HepG2 (cell line): ENCODE measurements at regions of chr2 and their contacts with region 1.

Region 1: DNA sequence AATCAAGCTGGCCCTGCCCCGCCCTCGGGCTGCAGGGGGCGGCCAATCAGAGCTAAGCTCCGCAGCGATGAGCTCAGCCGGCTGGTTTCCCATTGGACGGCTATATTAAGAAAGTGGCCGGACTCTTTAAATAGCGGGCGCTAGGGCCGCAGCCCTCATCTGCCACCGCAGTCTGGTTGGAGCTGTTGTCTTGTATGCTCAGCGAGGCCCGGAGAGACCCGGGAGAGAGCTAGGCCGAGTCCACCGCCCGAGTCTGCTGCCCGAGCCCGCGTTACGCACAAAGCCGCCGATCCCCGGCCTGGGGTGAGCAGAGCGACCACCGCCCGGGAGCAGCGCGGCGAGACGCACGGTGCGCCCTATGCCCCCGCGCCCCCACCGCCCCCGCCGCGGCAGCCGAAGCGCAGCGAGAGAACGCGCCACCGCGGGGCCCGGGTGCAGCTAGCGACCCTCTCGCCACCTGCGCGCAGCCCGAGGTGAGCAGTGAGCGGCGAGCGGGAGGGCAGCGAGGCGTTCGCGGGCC is at the start of gene RHOB:
- DNase-seq: peak; percentile 98
- ATAC-seq: peak; percentile 82
- H3K4me3 ChIP-seq: peak within 1 kb of the TSS; percentile 78 to 97 (median 89)
- H3K27ac ChIP-seq: peak within 1 kb of the TSS; percentile 92
- H3K4me1 ChIP-seq: peaks cover 60% of the 10 kb centered on the region
- H3K27me3 ChIP-seq: no peaks in the 10 kb centered on the region; a peak in 1 of 5 replicates
- CTCF ChIP-seq: no peak
- EP300 ChIP-seq: peak; percentile 35 to 54; a peak in 1 of 4 replicates
- POLR2A ChIP-seq: peak; percentile 100
- RAD21 ChIP-seq: peak; percentile 65
- total RNA-seq, gene RHOB: 192 and 268 TPM in 2 replicates

Region 2: GRCh38 chr2:20350753-20351554 is 96.0 kb before region 1 on chr2 and contains the start of gene PUM2:
- CTCF ChIA-PET with region 1: no interaction called
- POLR2A ChIA-PET with region 1: interaction called, 10 read pairs
- in situ Hi-C with region 1: no loop called
- intact Hi-C with region 1: no loop called
- DNase-seq: peak; percentile 96
- ATAC-seq: peak; percentile 87
- H3K4me3 ChIP-seq: peak within 1 kb of the TSS; percentile 96 to 98 (median 96)
- H3K27ac ChIP-seq: peak within 1 kb of the TSS; percentile 98
- H3K4me1 ChIP-seq: peaks cover 61% of the 10 kb centered on the region
- H3K27me3 ChIP-seq: no peaks in the 10 kb centered on the region; a peak in 1 of 5 replicates
- CTCF ChIP-seq: 0 out of 2 replicates have a peak, but pooled peaks have one; percentile 15
- EP300 ChIP-seq: peak in 1 of 2 experiments; percentile 54; a peak in 2 of 4 replicates
- POLR2A ChIP-seq: peak; percentile 62 to 94; a peak in 3 of 4 replicates
- RAD21 ChIP-seq: no peak; the same call in 1 of the 2 replicates
- total RNA-seq, gene PUM2: 69.6 and 94.7 TPM in 2 replicates

Region 3: DNA sequence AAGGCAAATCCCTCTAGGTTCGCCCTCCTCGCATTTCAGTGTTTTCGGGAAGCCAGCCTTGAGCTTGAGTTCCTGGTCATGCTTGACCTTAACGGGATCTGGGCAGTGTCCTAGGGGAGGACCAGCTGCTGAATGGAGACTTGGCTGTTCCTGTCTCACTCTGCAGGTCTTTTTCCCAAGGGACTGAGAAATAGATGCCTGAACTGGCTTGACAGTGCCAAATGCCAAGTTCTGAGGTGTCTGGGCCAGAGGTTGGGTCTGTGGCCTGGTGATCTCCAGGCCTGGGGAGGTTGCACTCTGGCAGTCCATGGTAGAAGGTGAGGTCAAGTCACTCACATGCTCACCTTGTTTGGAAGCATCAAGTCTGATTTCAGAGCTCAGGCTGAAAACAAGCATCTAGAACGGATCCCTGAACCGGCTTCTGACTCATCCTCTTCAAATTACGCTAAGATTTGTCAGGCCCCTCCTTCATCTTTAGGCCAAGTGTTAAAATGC is 19.5 kb after region 1 on chr2:
- CTCF ChIA-PET with region 1: no interaction called
- POLR2A ChIA-PET with region 1: interaction called, 95 read pairs
- in situ Hi-C with region 1: no loop called
- intact Hi-C with region 1: no loop called
- DNase-seq: no peak
- ATAC-seq: no peak; the same call in 2 of the 3 replicates
- H3K4me3 ChIP-seq: no peak overlapping the region
- H3K27ac ChIP-seq: no peak overlapping the region
- H3K4me1 ChIP-seq: peaks cover 23% of the 10 kb centered on the region
- H3K27me3 ChIP-seq: peaks cover 2 to 15% of the 10 kb centered on the region in 2 experiments; a peak in 3 of 5 replicates
- CTCF ChIP-seq: no peak
- EP300 ChIP-seq: no peak
- POLR2A ChIP-seq: no peak
- RAD21 ChIP-seq: no peak

Region 4: GRCh38 chr2:20507166-20507692 is 60.3 kb after region 1 on chr2:
- CTCF ChIA-PET with region 1: interaction called, 4 read pairs
- POLR2A ChIA-PET with region 1: interaction called, 74 read pairs
- in situ Hi-C with region 1: no loop called
- intact Hi-C with region 1: no loop called
- DNase-seq: no peak
- ATAC-seq: peak; percentile 55
- H3K4me3 ChIP-seq: no peak overlapping the region
- H3K27ac ChIP-seq: peak overlapping the region; percentile 14
- H3K4me1 ChIP-seq: peaks cover 71% of the 10 kb centered on the region
- H3K27me3 ChIP-seq: no peaks in the 10 kb centered on the region
- CTCF ChIP-seq: no peak
- EP300 ChIP-seq: no peak
- POLR2A ChIP-seq: no peak
- RAD21 ChIP-seq: no peak

Region 5: DNA sequence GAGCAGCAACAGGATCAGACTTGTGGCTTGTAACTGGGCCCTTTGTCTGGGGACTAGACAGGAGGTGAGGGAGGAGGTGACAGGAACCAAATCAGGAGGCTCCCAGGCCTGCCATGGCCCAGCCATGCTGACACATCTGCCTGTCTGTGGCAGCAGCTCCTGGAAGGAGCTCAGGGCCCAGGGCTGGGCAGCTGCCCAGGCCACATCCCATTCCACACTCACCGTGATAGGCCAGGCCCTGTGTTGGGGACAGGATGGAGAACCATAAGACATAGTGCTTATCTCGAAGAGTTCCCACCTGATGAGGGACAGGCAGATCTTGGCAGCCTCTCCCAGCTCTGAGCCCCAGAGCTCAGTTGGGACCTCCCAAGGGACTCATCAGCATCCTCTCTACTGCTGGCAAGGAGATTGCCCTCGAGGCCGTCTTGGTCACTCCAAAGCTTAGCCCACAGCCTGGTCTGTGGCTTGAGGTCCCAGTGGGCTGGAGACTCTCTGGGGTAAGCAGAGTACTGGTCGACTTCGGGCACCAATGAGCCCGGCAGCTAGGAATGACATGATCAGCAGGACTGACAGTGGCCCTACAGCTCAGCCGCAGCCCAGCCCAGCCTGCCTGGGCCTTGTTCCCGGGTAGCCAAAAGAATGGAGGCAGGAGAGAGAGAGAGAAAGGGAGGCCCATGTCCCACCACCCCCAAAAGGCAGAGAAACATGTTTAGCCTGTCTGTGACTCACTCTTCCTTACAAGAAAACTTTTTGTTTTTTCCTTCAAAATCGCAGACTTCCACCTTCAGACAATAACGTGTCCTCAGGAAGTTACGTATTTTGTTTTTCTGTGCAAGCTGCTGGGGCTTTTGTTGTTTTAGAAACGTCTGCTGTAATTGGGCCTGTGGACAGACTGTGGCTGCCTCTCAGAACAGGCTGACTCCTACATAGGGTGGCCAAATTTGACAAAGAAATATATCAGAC is 121.8 kb after region 1 on chr2:
- CTCF ChIA-PET with region 1: no interaction called
- POLR2A ChIA-PET with region 1: interaction called, 1,537 read pairs
- in situ Hi-C with region 1: no loop called
- intact Hi-C with region 1: no loop called
- DNase-seq: no peak
- ATAC-seq: no peak
- H3K4me3 ChIP-seq: no peak overlapping the region
- H3K27ac ChIP-seq: peak overlapping the region; percentile 49
- H3K4me1 ChIP-seq: peaks cover 96% of the 10 kb centered on the region
- H3K27me3 ChIP-seq: no peaks in the 10 kb centered on the region
- CTCF ChIP-seq: no peak
- EP300 ChIP-seq: no peak
- POLR2A ChIP-seq: no peak
- RAD21 ChIP-seq: no peak

Region 6: GRCh38 chr2:20629581-20630171 is 182.7 kb after region 1 on chr2:
- CTCF ChIA-PET with region 1: interaction called, 51 read pairs
- POLR2A ChIA-PET with region 1: interaction called, 84 read pairs
- in situ Hi-C with region 1: no loop called
- intact Hi-C with region 1: no loop called
- DNase-seq: no peak
- ATAC-seq: no peak
- H3K4me3 ChIP-seq: no peak overlapping the region
- H3K27ac ChIP-seq: no peak overlapping the region
- H3K4me1 ChIP-seq: peaks cover 48% of the 10 kb centered on the region
- H3K27me3 ChIP-seq: no peaks in the 10 kb centered on the region
- CTCF ChIP-seq: no peak
- EP300 ChIP-seq: no peak
- POLR2A ChIP-seq: no peak
- RAD21 ChIP-seq: no peak

Region 7: DNA sequence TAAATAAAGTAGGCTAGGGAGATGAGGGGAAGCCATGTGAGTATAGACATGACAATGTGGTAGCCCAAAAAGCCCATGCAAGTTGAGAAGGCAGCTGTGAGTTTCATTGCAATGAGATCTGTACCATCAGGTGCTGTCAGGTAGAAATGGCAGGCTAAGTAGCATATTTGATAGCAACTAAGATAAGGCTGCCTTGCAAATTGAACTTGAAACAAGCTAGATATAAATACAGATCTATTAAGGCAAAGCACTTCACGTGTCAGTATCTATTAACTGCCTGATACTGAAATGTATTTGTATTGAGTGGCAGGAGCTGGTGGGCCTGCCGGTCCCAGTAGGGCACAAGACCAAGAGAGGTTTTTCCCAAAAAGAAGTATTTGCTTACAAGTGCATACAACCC is 1096.7 kb after region 1 on chr2:
- CTCF ChIA-PET with region 1: no interaction called
- POLR2A ChIA-PET with region 1: no interaction called
- in situ Hi-C with region 1: no loop called
- intact Hi-C with region 1: no loop called
- DNase-seq: no peak
- ATAC-seq: no peak
- H3K4me3 ChIP-seq: no peak overlapping the region
- H3K27ac ChIP-seq: no peak overlapping the region
- H3K4me1 ChIP-seq: no peaks in the 10 kb centered on the region
- H3K27me3 ChIP-seq: no peaks in the 10 kb centered on the region
- CTCF ChIP-seq: no peak
- EP300 ChIP-seq: no peak
- POLR2A ChIP-seq: no peak
- RAD21 ChIP-seq: no peak